PC-9 (cell line): ENCODE measurements at regions of chr6 and their contacts with region 1.

Region 1: GRCh38 chr6:85126485-85127167 is 323.3 kb upstream of the NT5E start:
- DNase-seq: peak in 1 of 2 experiments; percentile 46
- H3K4me3 ChIP-seq: no peak overlapping the region
- H3K27ac ChIP-seq: no peak overlapping the region
- H3K4me1 ChIP-seq: no peaks in the 10 kb centered on the region; the same call in 1 of the 2 replicates
- H3K27me3 ChIP-seq: no peaks in the 10 kb centered on the region
- CTCF ChIP-seq: peak; percentile 57

Region 2: DNA sequence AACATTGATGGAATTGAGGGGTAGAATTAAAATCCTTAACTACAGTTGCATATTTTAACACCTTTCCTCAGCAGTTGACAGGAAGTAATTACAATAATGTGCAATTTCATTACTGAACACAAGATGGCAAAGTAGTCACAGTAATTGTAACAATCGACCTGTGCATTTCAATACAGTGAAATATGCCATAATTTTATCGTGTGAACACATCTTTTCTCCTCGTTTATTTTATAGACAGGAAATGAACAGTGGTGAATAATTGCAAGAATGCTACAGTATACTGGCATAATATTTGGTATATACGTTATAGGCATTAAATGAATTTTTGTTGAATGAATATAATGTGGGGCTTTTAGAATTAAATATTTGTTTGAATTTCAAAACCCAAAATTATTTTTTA is 1242.1 kb before region 1 on chr6:
- CTCF ChIA-PET with region 1: no interaction called
- POLR2A ChIA-PET with region 1: no interaction called
- intact Hi-C with region 1: loop called (anchors 10 kb)
- DNase-seq: peak in 1 of 2 experiments; percentile 59
- H3K4me3 ChIP-seq: no peak overlapping the region
- H3K27ac ChIP-seq: no peak overlapping the region
- H3K4me1 ChIP-seq: no peaks in the 10 kb centered on the region
- H3K27me3 ChIP-seq: no peaks in the 10 kb centered on the region
- CTCF ChIP-seq: peak; percentile 71

Region 3: GRCh38 chr6:84227434-84228197 is 899.0 kb before region 1 on chr6 and contains the start of gene CEP162:
- CTCF ChIA-PET with region 1: no interaction called
- POLR2A ChIA-PET with region 1: no interaction called
- intact Hi-C with region 1: loop called (anchors 5 kb)
- DNase-seq: peak; percentile 68 to 78
- H3K4me3 ChIP-seq: peak within 1 kb of the TSS; percentile 95
- H3K27ac ChIP-seq: no peak within 1 kb of the TSS
- H3K4me1 ChIP-seq: peaks cover 6% of the 10 kb centered on the region; the same call in 1 of the 2 replicates
- H3K27me3 ChIP-seq: peaks cover 3% of the 10 kb centered on the region; the same call in 1 of the 2 replicates
- CTCF ChIP-seq: peak; percentile 71
- total RNA-seq, gene CEP162: 5.8 and 6.0 TPM in 2 replicates

Region 4: DNA sequence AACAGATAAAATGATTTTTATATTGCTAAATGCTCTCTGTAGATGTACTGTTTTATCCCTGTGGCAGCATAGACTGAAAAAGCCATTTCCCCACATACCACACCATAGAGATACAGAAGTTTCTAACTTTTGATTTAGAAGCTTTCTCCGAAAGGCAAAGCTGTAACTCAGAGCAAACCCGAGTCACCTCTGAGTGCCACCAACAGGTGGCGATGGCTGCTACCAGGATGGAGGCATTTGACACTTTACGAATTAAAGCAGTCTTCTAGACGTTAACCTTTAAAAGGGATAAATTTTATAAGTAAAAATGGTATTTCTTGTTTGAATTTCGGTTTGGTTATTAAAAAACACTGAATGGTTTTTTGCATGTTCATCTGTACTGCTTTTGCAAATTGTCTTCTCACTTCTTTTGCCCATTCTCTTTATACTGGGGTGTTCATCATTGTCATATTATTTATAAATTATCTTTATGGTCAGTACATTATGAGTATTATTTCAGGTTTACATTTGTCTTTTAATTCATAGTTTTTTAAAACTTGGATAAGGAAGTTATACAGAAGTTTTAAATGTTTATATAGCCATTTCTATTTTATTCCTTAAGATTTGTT is 698.2 kb before region 1 on chr6:
- CTCF ChIA-PET with region 1: no interaction called
- POLR2A ChIA-PET with region 1: interaction called, 3 read pairs
- intact Hi-C with region 1: loop called (anchors 2 kb)
- DNase-seq: peak in 1 of 2 experiments; percentile 33
- H3K4me3 ChIP-seq: no peak overlapping the region
- H3K27ac ChIP-seq: no peak overlapping the region
- H3K4me1 ChIP-seq: no peaks in the 10 kb centered on the region
- H3K27me3 ChIP-seq: no peaks in the 10 kb centered on the region
- CTCF ChIP-seq: peak; percentile 76

Region 5: GRCh38 chr6:85015396-85015990 is 111.1 kb before region 1 on chr6:
- CTCF ChIA-PET with region 1: interaction called, 3 read pairs
- POLR2A ChIA-PET with region 1: no interaction called
- intact Hi-C with region 1: loop called (anchors 1 kb)
- DNase-seq: peak in 1 of 2 experiments; percentile 56
- H3K4me3 ChIP-seq: no peak overlapping the region
- H3K27ac ChIP-seq: no peak overlapping the region
- H3K4me1 ChIP-seq: no peaks in the 10 kb centered on the region
- H3K27me3 ChIP-seq: no peaks in the 10 kb centered on the region
- CTCF ChIP-seq: peak; percentile 74